ENCODE measurements at regions of chr13 and their contacts with region 1.

Region 1: DNA sequence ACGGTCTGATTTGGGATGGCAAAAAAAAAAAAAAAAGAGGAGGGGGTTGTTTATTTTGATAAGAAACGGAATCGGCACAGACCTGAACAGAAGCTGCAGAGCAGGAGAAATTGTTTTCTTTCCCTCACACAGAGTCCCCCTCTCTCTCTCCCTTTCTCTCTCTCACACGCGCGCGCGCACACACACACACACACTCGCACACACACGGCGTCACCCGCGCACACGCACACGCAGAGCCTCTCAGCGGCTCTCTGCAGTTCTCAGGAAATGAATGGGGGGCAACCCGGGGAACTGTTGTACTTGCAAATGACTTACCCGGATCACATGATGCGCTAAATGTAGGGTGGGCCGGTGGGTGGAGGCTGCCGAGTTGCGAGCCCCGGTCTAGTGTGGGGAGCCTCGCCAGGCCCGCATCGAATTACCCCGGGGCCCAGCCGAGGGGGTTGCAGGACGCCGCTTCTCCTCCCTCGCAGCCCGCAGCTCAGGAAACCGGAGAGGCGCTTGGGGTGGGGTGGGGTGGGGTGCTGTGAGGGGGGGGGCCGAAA is 475 bp downstream of the KLF12 start:
- DNase-seq: peak; percentile 88
- ATAC-seq: peak; percentile 63 to 74

Region 2: GRCh38 chr13:73835138-73835721 is 298.5 kb before region 1 on chr13:
- intact Hi-C with region 1: loop called in 1 of 2 experiments (anchors 5 kb)
- DNase-seq: no peak
- ATAC-seq: no peak

Region 3: GRCh38 chr13:74062933-74063332 is 70.8 kb before region 1 on chr13:
- intact Hi-C with region 1: loop called (anchors 5 to 10 kb)
- DNase-seq: peak; percentile 60
- ATAC-seq: peak; percentile 95 to 97

Region 4: GRCh38 chr13:74770361-74770760 is 636.6 kb after region 1 on chr13:
- intact Hi-C with region 1: no loop called
- DNase-seq: no peak
- ATAC-seq: peak; percentile 15 to 74

Measured in left cardiac atrium (tissue), 4 donors.